Activated T-helper 2 cell treated with anti-CD3 and anti-CD28 coated beads, Interferon-gamma antibody, Interleukin-2, Interleukin-4, amounts not matched to agents 10 μg/mL and 5 μg/mL and 100 μg/mL, durations not matched to agents 14 hours and 24 hours and 36 hours (primary cell): ENCODE measurements at regions of chr10 and their contacts with region 1.

Region 1: DNA sequence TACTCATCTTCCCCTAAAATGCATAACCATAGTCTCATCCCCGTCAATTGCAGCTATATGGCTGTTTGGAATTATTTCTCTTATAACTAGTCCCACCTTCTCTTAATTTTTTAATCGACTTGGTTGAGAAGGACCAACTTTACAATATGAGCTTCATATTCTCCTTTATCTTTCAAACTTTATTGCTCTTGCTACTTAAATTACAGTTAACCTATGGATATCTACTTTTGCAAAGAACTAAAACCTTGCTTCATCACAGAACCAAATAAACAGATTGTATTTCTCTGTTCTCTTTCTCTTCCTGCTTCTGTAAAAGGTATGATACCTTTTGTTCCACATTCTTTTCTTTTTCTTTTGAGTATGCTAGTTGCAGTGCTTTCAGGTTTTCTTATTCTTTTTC is 6.1 kb downstream of the CREM start:
- DNase-seq: no peak
- H3K4me3 Mint-ChIP-seq: peak overlapping the region; percentile 38
- H3K27ac Mint-ChIP-seq: peak overlapping the region; percentile 85
- H3K4me1 Mint-ChIP-seq: peaks cover 60% of the 10 kb centered on the region
- H3K27me3 Mint-ChIP-seq: no peaks in the 10 kb centered on the region

Region 2: DNA sequence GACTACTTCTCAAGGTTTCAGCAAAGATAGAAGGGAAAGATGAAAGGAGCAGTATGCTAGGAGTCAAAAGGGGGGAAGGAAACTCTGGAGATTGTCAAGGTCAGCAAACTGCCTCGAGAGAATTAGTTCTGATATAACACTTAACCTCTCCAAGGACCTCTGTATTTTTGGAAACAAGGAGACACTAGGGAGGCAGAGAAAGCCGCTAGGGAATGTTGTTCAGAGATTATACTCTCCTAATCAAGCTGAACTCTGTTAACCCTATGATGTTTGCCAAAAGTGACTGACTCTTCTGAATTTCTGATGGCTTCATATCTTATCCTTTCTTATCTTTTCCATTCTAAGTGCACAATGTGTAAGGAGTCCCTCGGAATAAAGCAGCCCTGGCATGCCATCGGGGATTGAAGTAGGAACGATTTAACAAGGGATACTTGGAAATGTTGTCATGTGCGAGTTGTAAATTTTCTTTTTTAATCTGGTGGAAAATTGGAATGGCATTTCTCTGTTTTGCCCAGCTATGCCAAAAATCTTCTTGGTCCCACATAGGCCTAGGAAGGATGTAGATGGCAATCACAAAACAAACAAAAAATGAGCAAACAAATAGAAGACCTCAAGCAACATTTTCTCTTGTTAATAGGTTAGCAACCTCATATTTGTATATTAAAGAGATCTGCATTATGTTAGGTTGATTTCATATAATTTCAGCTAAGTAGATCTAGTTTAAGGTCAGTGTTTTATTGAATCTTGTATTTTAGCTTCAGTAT is 21.2 kb after region 1 on chr10:
- intact Hi-C with region 1: loop called (anchors 1 kb)
- DNase-seq: no peak
- H3K4me3 Mint-ChIP-seq: no peak overlapping the region
- H3K27ac Mint-ChIP-seq: no peak overlapping the region
- H3K4me1 Mint-ChIP-seq: peaks cover 40% of the 10 kb centered on the region
- H3K27me3 Mint-ChIP-seq: no peaks in the 10 kb centered on the region